ENCODE measurements at regions of chr1 and their contacts with region 1.

Region 1: GRCh38 chr1:95043141-95043980 is 29.4 kb downstream of the ALG14 start:
- DNase-seq: peak; percentile 91
- H3K4me3 ChIP-seq: no peak overlapping the region
- H3K27ac ChIP-seq: no peak overlapping the region
- H3K4me1 ChIP-seq: no peaks in the 10 kb centered on the region
- H3K27me3 ChIP-seq: no peaks in the 10 kb centered on the region
- CTCF ChIP-seq: peak; percentile 100

Region 2: DNA sequence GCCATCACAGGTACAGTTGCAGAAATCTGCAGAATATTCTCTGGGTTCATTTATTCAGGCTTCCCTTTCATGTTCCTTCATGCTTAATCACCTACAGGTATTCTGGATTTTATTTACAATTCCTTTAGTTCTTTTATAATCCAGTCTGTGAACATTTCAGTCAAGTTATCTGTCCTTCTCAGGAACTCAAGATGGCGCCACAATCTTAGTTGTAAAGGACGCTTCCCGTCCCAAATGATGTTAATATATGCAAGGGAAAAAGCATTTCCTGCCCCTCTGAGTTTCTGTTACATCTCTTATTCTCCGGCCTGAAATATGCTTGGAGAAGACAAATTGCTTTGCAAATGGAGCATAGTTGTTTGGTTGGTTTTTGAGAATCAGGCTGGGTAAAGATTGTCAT is 521.1 kb before region 1 on chr1:
- CTCF ChIA-PET with region 1: no interaction called
- POLR2A ChIA-PET with region 1: no interaction called
- intact Hi-C with region 1: loop called (anchors 5 kb)
- DNase-seq: peak; percentile 82
- H3K4me3 ChIP-seq: no peak overlapping the region
- H3K27ac ChIP-seq: no peak overlapping the region
- H3K4me1 ChIP-seq: no peaks in the 10 kb centered on the region
- H3K27me3 ChIP-seq: no peaks in the 10 kb centered on the region
- CTCF ChIP-seq: peak; percentile 78

Region 3: GRCh38 chr1:94854458-94855306 is 188.7 kb before region 1 on chr1:
- CTCF ChIA-PET with region 1: interaction called, 118 read pairs
- POLR2A ChIA-PET with region 1: no interaction called
- intact Hi-C with region 1: loop called (anchors 1 kb)
- DNase-seq: peak; percentile 92
- H3K4me3 ChIP-seq: peak overlapping the region; percentile 44
- H3K27ac ChIP-seq: no peak overlapping the region
- H3K4me1 ChIP-seq: no peaks in the 10 kb centered on the region
- H3K27me3 ChIP-seq: no peaks in the 10 kb centered on the region
- CTCF ChIP-seq: peak; percentile 97

Region 4: GRCh38 chr1:94884106-94884505 is 159.3 kb before region 1 on chr1:
- CTCF ChIA-PET with region 1: interaction called, 11 read pairs
- POLR2A ChIA-PET with region 1: no interaction called
- intact Hi-C with region 1: no loop called
- DNase-seq: no peak
- H3K4me3 ChIP-seq: no peak overlapping the region
- H3K27ac ChIP-seq: no peak overlapping the region
- H3K4me1 ChIP-seq: no peaks in the 10 kb centered on the region
- H3K27me3 ChIP-seq: no peaks in the 10 kb centered on the region
- CTCF ChIP-seq: no peak

Region 5: GRCh38 chr1:95002540-95003432 is 40.6 kb before region 1 on chr1:
- CTCF ChIA-PET with region 1: interaction called, 12 read pairs
- POLR2A ChIA-PET with region 1: no interaction called
- intact Hi-C with region 1: no loop called
- DNase-seq: peak; percentile 94
- H3K4me3 ChIP-seq: peak overlapping the region; percentile 1
- H3K27ac ChIP-seq: peak overlapping the region; percentile 82
- H3K4me1 ChIP-seq: peaks cover 59% of the 10 kb centered on the region
- H3K27me3 ChIP-seq: no peaks in the 10 kb centered on the region
- CTCF ChIP-seq: no peak

Region 6: DNA sequence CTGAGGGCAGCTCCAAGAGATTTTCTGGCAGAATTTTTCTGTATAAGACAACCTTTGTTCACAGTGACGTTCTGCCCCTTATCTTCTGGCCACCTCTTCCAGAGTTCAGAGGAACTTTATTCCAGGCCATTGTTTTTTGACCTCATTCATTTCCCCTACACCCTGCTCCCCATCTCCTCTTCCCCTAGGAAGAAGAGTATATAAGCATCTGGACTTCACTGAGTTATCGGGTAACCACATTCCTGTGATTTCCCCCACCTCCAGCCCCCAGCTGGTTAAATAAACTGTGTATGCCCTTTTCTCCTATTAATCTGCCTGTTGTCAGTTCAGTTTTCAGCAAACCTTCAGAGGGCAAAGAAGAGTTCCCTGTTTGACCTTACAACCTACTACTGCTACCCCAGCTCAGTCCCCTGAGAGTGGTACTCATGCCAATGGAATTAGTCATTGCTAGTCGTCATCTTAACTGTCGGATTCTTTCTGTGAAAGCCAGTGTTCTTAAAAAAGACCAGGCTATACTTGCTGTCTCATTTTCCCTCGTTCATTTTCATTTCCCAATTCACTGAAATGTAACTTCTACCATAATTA is 43.7 kb after region 1 on chr1:
- CTCF ChIA-PET with region 1: no interaction called
- POLR2A ChIA-PET with region 1: no interaction called
- intact Hi-C with region 1: no loop called
- DNase-seq: peak; percentile 75
- H3K4me3 ChIP-seq: no peak overlapping the region
- H3K27ac ChIP-seq: no peak overlapping the region
- H3K4me1 ChIP-seq: no peaks in the 10 kb centered on the region
- H3K27me3 ChIP-seq: no peaks in the 10 kb centered on the region
- CTCF ChIP-seq: no peak

Region 7: GRCh38 chr1:95323123-95323522 is 279.8 kb after region 1 on chr1:
- CTCF ChIA-PET with region 1: no interaction called
- POLR2A ChIA-PET with region 1: no interaction called
- intact Hi-C with region 1: no loop called
- DNase-seq: peak; percentile 32
- H3K4me3 ChIP-seq: no peak overlapping the region
- H3K27ac ChIP-seq: no peak overlapping the region
- H3K4me1 ChIP-seq: peaks cover 3% of the 10 kb centered on the region
- H3K27me3 ChIP-seq: peaks cover 32% of the 10 kb centered on the region
- CTCF ChIP-seq: no peak

Measured in A673 (cell line).